Panc1 (cell line): ENCODE measurements at regions of chr13 and their contacts with region 1.

Region 1: DNA sequence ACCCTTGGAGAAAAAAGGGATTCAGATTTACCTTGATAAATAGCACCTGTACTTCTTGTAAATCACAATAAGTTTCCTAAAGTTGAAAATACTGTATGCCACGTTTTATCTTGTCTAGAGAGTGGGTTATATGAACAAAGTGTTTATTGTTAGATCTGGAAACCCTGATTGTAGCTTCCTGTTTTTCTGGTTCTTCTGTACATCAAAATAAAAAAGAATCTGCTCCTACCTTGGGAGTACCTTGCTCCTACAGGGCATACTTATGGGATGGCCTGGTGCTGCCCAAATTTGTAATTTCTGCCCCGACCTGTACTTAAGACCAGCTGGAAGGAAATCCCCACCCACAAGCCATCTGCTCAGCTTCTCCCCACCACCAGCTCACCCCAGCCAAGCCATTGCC is 241.1 kb downstream of the SLC7A1 start:
- DNase-seq: no peak
- ATAC-seq: no peak
- H3K4me3 ChIP-seq: no peak overlapping the region
- H3K27ac ChIP-seq: no peak overlapping the region
- H3K4me1 ChIP-seq: no peaks in the 10 kb centered on the region
- H3K27me3 ChIP-seq: no peaks in the 10 kb centered on the region; the same call in 1 of the 2 replicates
- CTCF ChIP-seq: no peak

Region 2: DNA sequence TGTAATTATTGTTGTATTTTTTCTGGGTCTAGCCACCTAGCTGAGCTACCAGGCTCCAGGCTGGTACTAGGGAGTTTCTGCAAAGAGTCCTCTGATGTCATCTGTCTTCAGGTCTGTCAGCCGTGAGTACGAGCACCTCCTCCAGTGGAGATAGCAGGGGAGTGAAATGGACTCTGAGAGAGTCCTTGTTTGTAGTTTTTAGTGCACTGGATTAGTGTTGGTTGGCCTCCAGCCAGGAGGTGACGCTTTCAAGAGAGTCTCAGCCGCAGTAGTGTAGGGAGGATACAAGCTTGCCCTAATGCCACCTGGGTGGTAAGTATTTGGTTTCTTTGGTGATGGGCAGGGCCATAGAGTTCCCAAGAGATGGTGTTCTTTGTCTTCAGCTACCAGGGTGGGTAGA is 143.7 kb before region 1 on chr13:
- CTCF ChIA-PET with region 1: no interaction called
- POLR2A ChIA-PET with region 1: no interaction called
- in situ Hi-C with region 1: no loop called
- intact Hi-C with region 1: loop called (anchors 2 kb)
- DNase-seq: no peak
- ATAC-seq: no peak
- H3K4me3 ChIP-seq: no peak overlapping the region
- H3K27ac ChIP-seq: no peak overlapping the region
- H3K4me1 ChIP-seq: no peaks in the 10 kb centered on the region
- H3K27me3 ChIP-seq: no peaks in the 10 kb centered on the region
- CTCF ChIP-seq: no peak

Region 3: DNA sequence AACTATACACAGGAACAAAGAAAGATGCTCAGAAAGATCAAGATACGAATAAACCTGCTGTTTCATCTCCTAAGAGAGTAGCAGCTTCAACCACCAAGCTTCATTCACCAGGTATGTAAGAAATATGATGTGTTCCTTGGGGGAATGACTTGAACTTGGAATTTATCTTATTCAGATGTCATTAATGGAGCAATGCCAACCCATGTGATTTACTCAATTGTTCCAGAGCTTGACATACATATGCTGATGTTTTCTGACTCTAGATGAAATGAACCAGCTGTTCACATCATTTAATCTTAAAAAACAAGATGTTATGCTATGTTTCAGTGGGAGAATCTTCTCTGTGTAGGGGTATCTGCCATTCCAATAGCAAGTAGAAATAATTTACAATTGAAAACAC is 29.8 kb before region 1 on chr13:
- CTCF ChIA-PET with region 1: no interaction called
- POLR2A ChIA-PET with region 1: no interaction called
- in situ Hi-C with region 1: no loop called
- intact Hi-C with region 1: no loop called
- DNase-seq: no peak
- ATAC-seq: no peak
- H3K4me3 ChIP-seq: no peak overlapping the region
- H3K27ac ChIP-seq: no peak overlapping the region
- H3K4me1 ChIP-seq: no peaks in the 10 kb centered on the region
- H3K27me3 ChIP-seq: no peaks in the 10 kb centered on the region; the same call in 1 of the 2 replicates
- CTCF ChIP-seq: no peak

Region 4: GRCh38 chr13:29861694-29862110 is 507.3 kb after region 1 on chr13:
- CTCF ChIA-PET with region 1: no interaction called
- POLR2A ChIA-PET with region 1: no interaction called
- in situ Hi-C with region 1: no loop called
- intact Hi-C with region 1: no loop called
- DNase-seq: no peak
- ATAC-seq: no peak
- H3K4me3 ChIP-seq: no peak overlapping the region
- H3K27ac ChIP-seq: no peak overlapping the region
- H3K4me1 ChIP-seq: no peaks in the 10 kb centered on the region
- H3K27me3 ChIP-seq: no peaks in the 10 kb centered on the region
- CTCF ChIP-seq: no peak

Region 5: GRCh38 chr13:30071969-30072817 is 717.8 kb after region 1 on chr13:
- CTCF ChIA-PET with region 1: no interaction called
- POLR2A ChIA-PET with region 1: no interaction called
- in situ Hi-C with region 1: no loop called
- intact Hi-C with region 1: no loop called
- DNase-seq: no peak
- ATAC-seq: no peak
- H3K4me3 ChIP-seq: no peak overlapping the region
- H3K27ac ChIP-seq: no peak overlapping the region
- H3K4me1 ChIP-seq: no peaks in the 10 kb centered on the region
- H3K27me3 ChIP-seq: no peaks in the 10 kb centered on the region
- CTCF ChIP-seq: no peak